ENCODE measurements at regions of chr4 and their contacts with region 1.

Region 1: DNA sequence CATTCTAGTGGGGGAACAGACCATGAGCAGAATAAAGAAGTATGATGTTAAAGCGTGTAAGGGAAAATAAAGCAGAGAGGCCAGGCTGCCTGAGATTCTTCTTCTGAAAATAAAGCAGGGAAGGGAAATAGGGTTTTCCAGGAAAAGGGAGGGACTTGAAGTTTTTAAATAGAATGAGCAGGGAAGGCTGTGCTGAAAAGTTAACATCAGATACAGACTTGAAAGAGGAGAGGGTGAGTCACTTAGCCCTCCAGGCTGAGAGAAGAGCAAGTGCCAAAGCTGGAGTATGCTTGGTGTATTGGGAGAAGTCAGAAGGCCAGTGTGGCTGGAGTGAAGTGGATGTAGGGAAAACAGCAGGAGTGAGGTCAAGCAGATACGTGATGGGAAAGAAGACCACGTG is 10.0 kb upstream of the PLK4 start:
- DNase-seq: peak in 1 of 2 donors; percentile 39
- ATAC-seq: peak in 7 of 8 donors; percentile 58 to 97 (median 91)
- H3K4me3 ChIP-seq: peak overlapping the region in 4 of 10 donors; percentile 4 to 18 (median 11)
- H3K27ac ChIP-seq: peak overlapping the region in 7 of 10 donors; percentile 27 to 73 (median 61)
- H3K4me1 ChIP-seq: peaks cover 0 to 24% (median 15%) of the 10 kb centered on the region in 9 donors
- H3K27me3 ChIP-seq: no peaks in the 10 kb centered on the region
- CTCF ChIP-seq: no peak

Region 2: GRCh38 chr4:127798446-127798845 is 72.2 kb before region 1 on chr4:
- intact Hi-C with region 1: no loop called
- DNase-seq: no peak
- ATAC-seq: no peak
- H3K4me3 ChIP-seq: no peak overlapping the region
- H3K27ac ChIP-seq: no peak overlapping the region
- H3K4me1 ChIP-seq: no peaks in the 10 kb centered on the region
- H3K27me3 ChIP-seq: no peaks in the 10 kb centered on the region
- CTCF ChIP-seq: no peak

Region 3: DNA sequence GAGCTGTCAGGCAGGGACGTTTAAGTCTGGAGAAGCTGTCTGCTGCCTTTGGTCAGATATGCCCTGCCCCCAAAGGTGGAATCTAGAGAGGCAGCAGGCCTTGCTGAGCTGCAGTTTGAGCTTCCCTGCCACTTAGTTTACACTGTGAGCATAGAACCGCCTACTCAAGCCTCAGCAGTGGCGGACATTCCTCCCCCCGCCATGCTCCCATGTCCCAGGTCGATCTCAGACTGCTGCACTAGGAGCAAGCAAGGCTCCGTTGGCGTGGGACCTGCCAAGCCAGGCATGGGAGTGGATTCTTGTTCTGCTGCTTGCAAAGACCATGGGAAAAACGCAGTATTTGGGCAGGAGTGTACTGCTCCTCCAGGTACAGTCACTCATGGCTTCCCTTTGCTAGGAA is 34.3 kb after region 1 on chr4:
- intact Hi-C with region 1: loop called in 1 of 10 experiments (anchors 1 kb)
- DNase-seq: no peak
- ATAC-seq: no peak
- H3K4me3 ChIP-seq: no peak overlapping the region
- H3K27ac ChIP-seq: no peak overlapping the region
- H3K4me1 ChIP-seq: no peaks in the 10 kb centered on the region
- H3K27me3 ChIP-seq: no peaks in the 10 kb centered on the region
- CTCF ChIP-seq: no peak

Measured in heart right ventricle (tissue), 16 donors.